Naive thymus-derived CD4-positive, alpha-beta T cell (primary cell): ENCODE measurements at regions of chr10 and their contacts with region 1.

Region 1: DNA sequence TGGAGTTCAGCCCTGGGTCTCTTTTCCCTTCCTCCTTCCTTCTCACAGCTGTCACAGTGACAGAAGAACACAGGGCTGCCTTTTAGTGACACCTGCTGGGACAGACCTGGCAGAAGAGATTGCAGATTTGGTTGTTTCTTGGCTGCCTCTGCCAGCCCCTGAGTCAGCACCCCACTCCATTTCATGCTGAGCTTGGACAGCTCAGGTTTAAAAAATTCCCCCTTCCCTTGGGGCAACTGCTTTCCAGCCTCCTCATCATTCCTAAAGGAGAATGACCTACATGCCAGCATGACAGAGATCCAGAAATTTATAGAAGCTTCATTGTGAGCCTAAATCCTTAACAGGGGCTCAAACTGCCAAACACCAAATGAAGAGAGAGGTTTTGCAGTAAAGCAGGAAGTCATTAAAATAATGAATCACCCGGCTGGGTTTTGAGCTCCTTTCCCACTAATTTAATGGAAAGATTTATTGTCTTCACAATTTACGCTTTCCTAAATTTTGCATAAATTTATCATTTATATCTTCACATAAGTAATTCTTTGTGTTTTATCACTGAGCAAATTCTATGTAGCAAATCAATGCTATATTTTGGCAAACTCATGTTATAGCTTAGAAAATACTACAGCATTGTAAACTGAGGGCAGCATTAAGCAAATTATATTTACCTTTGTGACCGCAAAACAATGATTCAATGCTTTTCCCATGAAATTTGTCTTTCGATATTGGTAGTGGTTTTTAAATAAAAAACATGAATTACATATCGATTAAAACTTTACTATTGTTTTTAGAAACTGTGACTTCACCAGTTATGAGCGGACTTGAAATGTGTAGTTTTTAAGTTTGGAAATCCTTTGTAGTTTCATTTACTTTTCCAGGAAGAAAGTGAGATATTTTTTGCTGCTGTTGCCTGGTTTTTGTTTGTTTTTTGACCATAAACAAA is 399.5 kb upstream of the ANKRD30A start:
- DNase-seq: no peak
- ATAC-seq: no peak
- H3K4me3 ChIP-seq: no peak overlapping the region
- H3K4me3 Mint-ChIP-seq: no peak overlapping the region
- H3K27ac ChIP-seq: no peak overlapping the region
- H3K27ac Mint-ChIP-seq: no peak overlapping the region
- H3K4me1 ChIP-seq: no peaks in the 10 kb centered on the region
- H3K4me1 Mint-ChIP-seq: peaks cover 0 to 2% (median 0%) of the 10 kb centered on the region in 7 donors
- H3K27me3 ChIP-seq: no peaks in the 10 kb centered on the region
- H3K27me3 Mint-ChIP-seq: no peaks in the 10 kb centered on the region

Region 2: DNA sequence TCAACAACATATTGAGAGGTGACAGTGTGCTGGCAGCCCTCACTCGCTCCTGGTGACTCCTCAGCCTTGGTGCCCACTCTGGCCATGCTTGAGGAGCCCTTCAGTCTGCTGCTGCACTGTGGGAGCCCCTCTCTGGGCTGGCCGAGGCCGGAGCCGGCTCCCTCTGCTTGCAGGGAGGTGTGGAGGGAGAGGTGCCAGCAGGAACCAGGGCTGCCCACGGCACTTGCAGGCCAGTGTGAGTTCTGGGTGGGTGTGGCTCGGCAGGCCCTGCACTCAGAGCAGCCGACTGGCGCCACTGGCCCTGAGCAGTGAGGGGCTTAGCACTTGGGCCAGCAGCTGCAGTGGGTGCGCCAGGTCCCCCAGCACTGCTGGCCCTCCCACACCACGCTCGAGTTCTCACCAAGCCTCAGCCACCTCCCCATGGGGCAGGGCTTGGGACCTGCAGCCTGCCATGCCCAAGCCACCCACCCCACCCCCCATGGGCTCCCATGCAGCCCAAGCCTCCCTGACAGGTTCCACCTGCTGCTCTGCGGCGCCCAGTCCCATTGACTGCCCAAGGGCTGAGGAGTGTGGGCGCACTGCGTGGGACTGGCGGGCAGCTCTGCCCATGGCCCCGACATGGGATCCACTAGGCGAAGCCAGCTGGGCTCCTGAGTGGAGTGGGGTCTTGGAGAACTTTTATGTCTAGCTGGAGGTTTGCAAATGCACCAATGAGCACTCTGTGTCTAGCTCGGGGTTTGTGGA is 22.4 kb after region 1 on chr10:
- CTCF ChIA-PET with region 1: no interaction called
- POLR2A ChIA-PET with region 1: no interaction called
- intact Hi-C with region 1: loop called in 1 of 2 experiments (anchors 1 kb)
- DNase-seq: no peak
- ATAC-seq: no peak
- H3K4me3 ChIP-seq: no peak overlapping the region
- H3K4me3 Mint-ChIP-seq: no peak overlapping the region
- H3K27ac ChIP-seq: no peak overlapping the region
- H3K27ac Mint-ChIP-seq: no peak overlapping the region
- H3K4me1 ChIP-seq: no peaks in the 10 kb centered on the region
- H3K4me1 Mint-ChIP-seq: no peaks in the 10 kb centered on the region
- H3K27me3 ChIP-seq: no peaks in the 10 kb centered on the region
- H3K27me3 Mint-ChIP-seq: no peaks in the 10 kb centered on the region

Region 3: DNA sequence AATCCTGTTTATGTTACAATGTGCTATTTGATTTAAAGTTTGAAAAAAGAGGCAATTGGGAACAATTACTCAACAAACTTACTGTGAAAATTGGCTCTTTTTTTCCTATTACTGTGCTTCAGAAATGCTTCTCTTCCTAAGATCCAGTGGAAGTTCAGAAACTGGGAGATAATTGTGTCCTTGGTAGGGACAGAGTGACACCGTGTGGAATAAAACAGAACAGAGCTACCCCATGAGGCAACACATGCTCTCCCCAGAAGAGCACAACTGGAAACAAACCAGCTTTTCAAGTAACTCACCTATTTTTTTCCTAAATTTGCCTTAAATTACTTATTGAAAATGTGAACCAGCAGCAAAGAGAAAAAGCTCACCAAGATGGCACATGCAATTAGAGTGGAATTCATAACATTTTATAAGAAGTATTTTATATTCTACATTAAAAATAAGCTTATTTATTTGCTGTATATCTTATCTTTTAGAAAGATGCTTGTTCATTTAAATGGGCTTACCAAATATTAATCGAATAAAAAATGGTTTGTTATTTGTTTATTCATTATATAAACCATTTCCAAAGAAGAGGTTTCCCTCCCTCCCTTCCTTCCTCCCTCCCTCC is 53.5 kb after region 1 on chr10:
- CTCF ChIA-PET with region 1: no interaction called
- POLR2A ChIA-PET with region 1: no interaction called
- intact Hi-C with region 1: no loop called
- DNase-seq: no peak
- ATAC-seq: no peak
- H3K4me3 ChIP-seq: no peak overlapping the region
- H3K4me3 Mint-ChIP-seq: no peak overlapping the region
- H3K27ac ChIP-seq: no peak overlapping the region
- H3K27ac Mint-ChIP-seq: no peak overlapping the region
- H3K4me1 ChIP-seq: no peaks in the 10 kb centered on the region
- H3K4me1 Mint-ChIP-seq: no peaks in the 10 kb centered on the region
- H3K27me3 ChIP-seq: no peaks in the 10 kb centered on the region
- H3K27me3 Mint-ChIP-seq: no peaks in the 10 kb centered on the region